ENCODE measurements at regions of chr2 and their contacts with region 1.

Region 1: DNA sequence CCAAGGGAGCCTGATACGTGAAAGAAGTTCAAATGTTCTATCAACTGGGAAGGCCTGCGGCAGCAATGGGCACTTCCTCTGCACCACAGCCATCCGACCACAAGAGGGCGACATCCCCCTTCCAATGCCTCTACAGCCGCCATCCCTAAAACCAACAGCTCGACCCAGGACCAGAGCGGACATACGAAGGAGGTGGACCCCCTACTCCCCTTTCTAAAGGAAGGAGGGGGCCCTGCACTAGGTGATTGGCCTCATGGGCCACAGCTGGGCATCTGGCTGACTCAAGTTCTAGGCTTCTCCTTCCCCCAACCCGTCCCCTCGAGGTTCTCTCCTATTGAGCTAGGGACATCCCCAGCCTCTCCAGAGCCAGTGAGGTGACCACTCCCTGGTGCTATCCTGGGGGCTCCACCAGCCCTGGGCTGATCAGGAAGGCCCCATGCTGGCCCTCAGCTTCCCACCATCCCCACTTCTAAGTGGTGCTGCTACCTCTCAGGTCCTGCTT is 217.2 kb downstream of the TNS1 start:
- DNase-seq: peak; percentile 63 to 73 (median 70)
- ATAC-seq: peak; percentile 88
- H3K4me3 ChIP-seq: no peak overlapping the region
- H3K27ac ChIP-seq: no peak overlapping the region
- H3K4me1 ChIP-seq: peaks cover 0 to 5% of the 10 kb centered on the region in 2 experiments; a peak in 3 of 5 replicates
- H3K27me3 ChIP-seq: no peaks in the 10 kb centered on the region
- CTCF ChIP-seq: peak; percentile 82 to 91 (median 90)
- EP300 ChIP-seq: no peak
- POLR2A ChIP-seq: no peak
- RAD21 ChIP-seq: peak; percentile 66 to 81

Region 2: DNA sequence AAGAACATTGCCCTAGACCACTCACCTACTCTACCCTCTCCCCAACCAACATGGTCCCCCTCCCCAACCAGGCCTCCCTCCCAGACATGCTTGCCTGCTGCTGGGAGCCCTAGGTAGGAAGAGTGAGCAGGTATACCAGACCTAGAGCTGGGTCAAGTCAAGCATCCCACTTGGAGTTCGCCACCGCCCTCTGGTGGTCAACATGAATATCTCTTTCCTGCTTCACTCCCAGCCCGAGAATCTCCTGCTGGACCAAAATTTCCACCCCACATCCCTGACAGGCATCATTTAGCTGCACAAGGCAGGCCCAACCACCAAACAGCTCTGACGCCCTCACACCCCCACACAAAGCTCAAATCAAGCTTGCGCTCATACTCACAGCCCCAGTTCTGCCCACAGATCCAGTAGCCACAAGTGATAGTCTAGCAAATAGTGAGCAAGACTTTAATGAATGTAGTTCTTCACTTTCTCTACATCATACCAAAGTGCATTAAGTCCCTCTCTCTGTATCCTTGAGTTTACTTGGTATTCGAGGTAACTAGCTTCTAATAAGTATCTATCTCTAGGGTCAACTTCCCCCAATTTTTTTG is 101.2 kb after region 1 on chr2:
- CTCF ChIA-PET with region 1: interaction called, 13 read pairs
- POLR2A ChIA-PET with region 1: no interaction called
- in situ Hi-C with region 1: loop called (anchors 5 kb)
- intact Hi-C with region 1: loop called (anchors 1 kb)
- DNase-seq: peak; percentile 59 to 72 (median 68)
- ATAC-seq: peak; percentile 90
- H3K4me3 ChIP-seq: no peak overlapping the region
- H3K27ac ChIP-seq: no peak overlapping the region
- H3K4me1 ChIP-seq: peaks cover 3 to 6% of the 10 kb centered on the region in 2 experiments; a peak in 3 of 5 replicates
- H3K27me3 ChIP-seq: no peaks in the 10 kb centered on the region; a peak in 2 of 5 replicates
- CTCF ChIP-seq: peak; percentile 72 to 75 (median 72)
- EP300 ChIP-seq: no peak
- POLR2A ChIP-seq: no peak
- RAD21 ChIP-seq: peak; percentile 43 to 68; a peak in 3 of 4 replicates